ENCODE measurements at regions of chr4 and their contacts with region 1.

Region 1: GRCh38 chr4:4995103-4995907 is 24.0 kb downstream of the CYTL1 start:
- DNase-seq: peak; percentile 78
- H3K4me3 ChIP-seq: no peak overlapping the region
- H3K27ac ChIP-seq: no peak overlapping the region
- H3K4me1 ChIP-seq: peaks cover 11% of the 10 kb centered on the region
- H3K27me3 ChIP-seq: no peaks in the 10 kb centered on the region
- CTCF ChIP-seq: peak; percentile 88

Region 2: DNA sequence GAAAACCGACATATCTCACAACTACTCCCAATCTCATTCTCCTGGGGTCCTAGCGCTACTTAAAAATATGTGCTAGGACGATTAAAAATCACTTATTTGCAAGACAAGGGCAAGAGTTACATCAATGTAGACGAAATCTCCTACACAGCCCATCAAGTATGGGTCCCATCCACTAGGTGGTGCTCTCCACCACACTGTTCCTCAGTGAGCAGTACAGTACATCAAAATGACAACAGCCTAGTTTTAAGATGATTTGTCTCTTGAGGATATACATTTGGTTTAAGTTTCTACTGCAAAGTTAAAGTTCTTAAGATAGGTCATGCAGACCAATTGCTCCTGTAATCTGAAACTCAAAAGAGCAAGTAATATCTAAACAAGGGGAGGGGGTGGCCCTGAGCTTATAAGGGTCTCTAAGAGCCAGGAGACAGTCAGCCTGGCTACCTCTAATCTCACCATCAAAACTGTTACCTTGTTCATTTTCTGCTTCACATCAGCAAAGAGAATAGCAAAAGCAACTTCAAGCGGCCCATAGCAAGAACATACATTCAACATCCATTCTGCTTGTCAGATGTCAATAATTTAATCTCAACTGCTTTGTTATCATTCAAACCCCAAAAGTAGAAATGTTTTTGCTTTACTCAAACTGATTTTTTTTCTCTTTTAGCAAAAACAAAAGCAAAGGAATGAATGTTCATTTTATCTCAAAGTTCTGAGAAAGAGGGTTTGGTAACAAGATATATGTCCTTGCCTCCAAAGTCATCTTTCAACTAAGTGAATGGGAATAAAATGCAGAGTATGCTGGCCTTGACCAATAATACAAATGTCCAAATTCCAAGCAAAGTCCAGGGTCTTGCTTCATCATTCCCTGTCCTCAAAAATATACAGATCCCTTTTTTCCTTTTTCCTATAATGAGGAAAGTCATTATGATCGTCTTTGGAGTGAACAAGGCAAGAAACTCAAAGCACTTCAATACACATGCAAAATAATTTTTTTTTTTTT is 506.6 kb before region 1 on chr4:
- CTCF ChIA-PET with region 1: no interaction called
- POLR2A ChIA-PET with region 1: no interaction called
- intact Hi-C with region 1: loop called (anchors 10 kb)
- DNase-seq: peak; percentile 85
- H3K4me3 ChIP-seq: no peak overlapping the region
- H3K27ac ChIP-seq: no peak overlapping the region
- H3K4me1 ChIP-seq: peaks cover 22% of the 10 kb centered on the region
- H3K27me3 ChIP-seq: no peaks in the 10 kb centered on the region
- CTCF ChIP-seq: peak; percentile 91

Region 3: GRCh38 chr4:5045097-5045496 is 49.8 kb after region 1 on chr4:
- CTCF ChIA-PET with region 1: no interaction called
- POLR2A ChIA-PET with region 1: no interaction called
- intact Hi-C with region 1: loop called (anchors 5 kb)
- DNase-seq: peak; percentile 75
- H3K4me3 ChIP-seq: no peak overlapping the region
- H3K27ac ChIP-seq: no peak overlapping the region
- H3K4me1 ChIP-seq: peaks cover 23% of the 10 kb centered on the region
- H3K27me3 ChIP-seq: no peaks in the 10 kb centered on the region
- CTCF ChIP-seq: no peak

Region 4: GRCh38 chr4:5378002-5378401 is 382.7 kb after region 1 on chr4:
- CTCF ChIA-PET with region 1: no interaction called
- POLR2A ChIA-PET with region 1: no interaction called
- intact Hi-C with region 1: loop called (anchors 10 kb)
- DNase-seq: peak; percentile 62
- H3K4me3 ChIP-seq: no peak overlapping the region
- H3K27ac ChIP-seq: no peak overlapping the region
- H3K4me1 ChIP-seq: no peaks in the 10 kb centered on the region
- H3K27me3 ChIP-seq: no peaks in the 10 kb centered on the region
- CTCF ChIP-seq: peak; percentile 58

Region 5: DNA sequence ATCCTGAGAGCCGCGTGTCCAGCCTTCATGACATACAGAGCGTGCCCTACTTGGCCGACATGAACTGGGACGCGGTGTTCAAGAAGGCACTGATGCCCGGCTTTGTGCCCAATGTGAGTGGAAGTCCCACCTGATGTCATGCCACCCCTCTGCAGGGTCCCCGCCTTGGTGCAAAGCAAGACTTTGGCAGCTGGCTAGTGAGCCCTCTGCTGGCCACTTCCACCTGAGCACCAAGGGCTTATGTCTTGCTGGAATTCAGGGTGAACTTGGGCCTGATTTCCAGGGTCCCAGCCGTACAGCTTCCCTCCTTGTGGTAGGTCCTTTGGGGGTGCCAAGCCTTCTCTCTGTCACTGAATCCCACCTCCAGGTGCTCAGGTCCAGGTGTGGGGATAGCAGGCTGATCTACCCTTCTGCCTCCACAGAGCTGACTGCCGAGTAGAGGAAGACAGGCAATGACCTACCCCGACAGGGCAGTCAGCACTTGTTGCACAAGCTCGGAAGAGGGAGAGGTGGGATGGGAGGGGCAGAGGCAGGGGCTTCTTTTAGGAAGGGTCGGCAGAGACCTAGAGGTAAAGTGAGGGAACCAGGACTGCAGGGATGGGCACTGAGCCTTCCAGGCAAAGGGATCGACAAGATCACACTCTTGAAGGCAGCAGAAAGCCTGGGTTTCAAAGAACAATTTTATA is 465.0 kb after region 1 on chr4:
- CTCF ChIA-PET with region 1: no interaction called
- POLR2A ChIA-PET with region 1: no interaction called
- intact Hi-C with region 1: loop called (anchors 5 kb)
- DNase-seq: peak; percentile 52
- H3K4me3 ChIP-seq: no peak overlapping the region
- H3K27ac ChIP-seq: no peak overlapping the region
- H3K4me1 ChIP-seq: no peaks in the 10 kb centered on the region
- H3K27me3 ChIP-seq: no peaks in the 10 kb centered on the region
- CTCF ChIP-seq: peak; percentile 77

Region 6: GRCh38 chr4:5710961-5711478 is 715.7 kb after region 1 on chr4 and contains the start of gene EVC:
- CTCF ChIA-PET with region 1: no interaction called
- POLR2A ChIA-PET with region 1: no interaction called
- intact Hi-C with region 1: no loop called
- DNase-seq: peak; percentile 89
- H3K4me3 ChIP-seq: peak within 1 kb of the TSS; percentile 59
- H3K27ac ChIP-seq: peak within 1 kb of the TSS; percentile 42
- H3K4me1 ChIP-seq: peaks cover 30% of the 10 kb centered on the region
- H3K27me3 ChIP-seq: no peaks in the 10 kb centered on the region
- CTCF ChIP-seq: no peak
- total RNA-seq, gene EVC: 17.3 and 20.6 TPM in 2 replicates

Region 7: DNA sequence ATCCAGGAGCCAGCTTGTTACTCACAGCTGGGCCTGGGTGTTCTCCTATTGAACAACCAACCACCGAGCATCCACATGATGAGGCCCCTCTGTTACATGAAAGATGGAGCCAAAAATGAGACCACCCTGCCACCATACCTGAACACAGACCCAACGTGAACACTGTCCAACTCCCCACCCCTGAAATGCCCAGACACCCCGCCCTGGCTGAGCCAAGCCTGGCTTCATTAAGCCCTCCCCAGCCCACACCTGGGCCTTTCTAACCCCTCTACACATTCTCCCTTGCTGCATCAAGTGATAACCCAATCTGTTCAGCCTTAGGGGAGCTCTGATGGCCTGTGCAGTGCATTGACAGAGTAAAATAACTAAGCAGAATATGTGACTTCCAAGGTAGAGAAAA is 796.3 kb after region 1 on chr4:
- CTCF ChIA-PET with region 1: no interaction called
- POLR2A ChIA-PET with region 1: no interaction called
- intact Hi-C with region 1: loop called (anchors 2 kb)
- DNase-seq: no peak
- H3K4me3 ChIP-seq: no peak overlapping the region
- H3K27ac ChIP-seq: no peak overlapping the region
- H3K4me1 ChIP-seq: no peaks in the 10 kb centered on the region
- H3K27me3 ChIP-seq: no peaks in the 10 kb centered on the region
- CTCF ChIP-seq: no peak

Region 8: DNA sequence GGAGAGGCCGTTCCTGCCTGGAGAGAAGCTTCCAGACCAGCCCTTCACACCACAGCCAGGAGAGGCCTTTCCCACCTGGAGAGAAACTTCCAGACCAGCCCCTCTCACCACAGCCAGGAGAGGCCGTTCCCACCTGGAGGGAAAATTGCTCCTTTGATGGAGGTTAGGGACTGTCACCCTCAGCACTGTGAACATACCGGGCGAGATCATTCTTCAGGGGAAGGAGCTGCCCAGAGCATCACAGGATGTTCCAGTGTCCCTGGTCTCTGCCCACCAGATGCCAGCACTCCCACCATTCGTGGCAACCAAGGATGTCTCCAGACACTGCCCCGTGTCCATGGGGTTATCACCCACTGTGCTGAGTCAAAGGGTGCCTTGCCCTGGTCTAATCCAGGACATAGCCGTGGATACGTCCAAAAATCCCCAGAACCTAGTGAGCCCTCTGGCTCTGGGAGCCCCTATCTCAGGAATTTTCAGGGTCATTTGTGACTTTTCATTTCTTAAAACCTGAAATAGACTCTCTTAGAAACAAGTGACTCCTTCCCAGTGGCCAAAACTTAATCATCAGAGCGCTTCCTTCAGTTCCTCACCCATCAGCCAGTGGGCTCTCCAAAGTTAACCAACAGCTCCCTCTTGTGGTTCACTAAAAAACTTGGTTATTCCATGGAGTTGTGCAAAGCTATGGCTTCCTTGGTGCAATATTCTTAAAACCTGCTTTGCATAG is 817.4 kb after region 1 on chr4:
- CTCF ChIA-PET with region 1: no interaction called
- POLR2A ChIA-PET with region 1: no interaction called
- intact Hi-C with region 1: loop called (anchors 2 kb)
- DNase-seq: peak; percentile 85
- H3K4me3 ChIP-seq: no peak overlapping the region
- H3K27ac ChIP-seq: no peak overlapping the region
- H3K4me1 ChIP-seq: peaks cover 12% of the 10 kb centered on the region
- H3K27me3 ChIP-seq: no peaks in the 10 kb centered on the region
- CTCF ChIP-seq: peak; percentile 72